ENCODE measurements at regions of chr17 and their contacts with region 1.

Region 1: DNA sequence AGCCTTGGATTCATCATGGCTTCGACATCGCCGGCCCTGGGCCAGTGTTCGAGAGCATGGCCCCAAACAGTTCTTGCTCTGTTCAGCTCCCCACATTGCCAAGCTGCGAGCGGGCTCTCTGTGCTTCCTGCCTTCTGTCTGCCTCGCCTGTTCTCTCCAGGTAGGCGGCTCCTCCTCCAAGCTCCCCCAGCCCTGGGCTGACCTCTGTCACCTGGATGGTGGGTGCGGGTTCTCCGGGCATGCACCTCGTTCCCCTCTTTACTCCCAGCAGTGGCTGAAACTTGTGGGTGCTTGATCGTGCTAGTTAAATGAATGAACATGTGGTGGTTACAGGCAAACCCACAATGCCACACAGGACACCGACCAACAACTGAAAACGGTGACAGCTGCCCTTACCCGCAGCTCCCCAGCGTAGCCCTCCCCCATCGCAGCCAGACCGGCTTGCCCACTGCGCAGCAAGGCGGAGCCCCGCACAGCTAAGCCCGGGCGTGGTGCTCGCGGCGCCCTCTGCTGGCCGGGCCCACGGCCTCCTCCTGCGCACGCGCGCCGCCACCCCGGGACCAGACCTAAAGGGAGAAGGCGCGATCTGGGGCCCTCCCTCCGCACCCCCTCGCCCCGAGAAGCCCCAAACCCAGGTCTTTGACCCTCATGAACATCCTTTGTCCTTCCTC is 23.0 kb upstream of the EIF1 start:
- DNase-seq: peak; percentile 91 to 98 (median 96)
- ATAC-seq: peak; percentile 92
- H3K4me3 ChIP-seq: peak overlapping the region; percentile 39
- H3K27ac ChIP-seq: peak overlapping the region; percentile 81
- H3K4me1 ChIP-seq: peaks cover 40 to 50% of the 10 kb centered on the region in 2 experiments
- H3K27me3 ChIP-seq: no peaks in the 10 kb centered on the region
- CTCF ChIP-seq: peak; percentile 90 to 97 (median 93)
- EP300 ChIP-seq: no peak; the same call in 1 of the 2 replicates
- POLR2A ChIP-seq: peak; percentile 72
- RAD21 ChIP-seq: peak in 1 of 2 experiments; percentile 21; a peak in 2 of 4 replicates

Region 2: GRCh38 chr17:40615295-40615988 is 1050.3 kb before region 1 on chr17:
- CTCF ChIA-PET with region 1: interaction called, 7 read pairs
- POLR2A ChIA-PET with region 1: no interaction called
- in situ Hi-C with region 1: loop called (anchors 25 kb)
- intact Hi-C with region 1: loop called (anchors 5 kb)
- DNase-seq: peak; percentile 52 to 75 (median 64)
- ATAC-seq: peak; percentile 92
- H3K4me3 ChIP-seq: no peak overlapping the region
- H3K27ac ChIP-seq: no peak overlapping the region
- H3K4me1 ChIP-seq: no peaks in the 10 kb centered on the region
- H3K27me3 ChIP-seq: peaks cover 11 to 55% of the 10 kb centered on the region in 2 experiments
- CTCF ChIP-seq: peak; percentile 80 to 83 (median 81)
- EP300 ChIP-seq: no peak
- POLR2A ChIP-seq: no peak
- RAD21 ChIP-seq: peak; percentile 56 to 82

Region 3: DNA sequence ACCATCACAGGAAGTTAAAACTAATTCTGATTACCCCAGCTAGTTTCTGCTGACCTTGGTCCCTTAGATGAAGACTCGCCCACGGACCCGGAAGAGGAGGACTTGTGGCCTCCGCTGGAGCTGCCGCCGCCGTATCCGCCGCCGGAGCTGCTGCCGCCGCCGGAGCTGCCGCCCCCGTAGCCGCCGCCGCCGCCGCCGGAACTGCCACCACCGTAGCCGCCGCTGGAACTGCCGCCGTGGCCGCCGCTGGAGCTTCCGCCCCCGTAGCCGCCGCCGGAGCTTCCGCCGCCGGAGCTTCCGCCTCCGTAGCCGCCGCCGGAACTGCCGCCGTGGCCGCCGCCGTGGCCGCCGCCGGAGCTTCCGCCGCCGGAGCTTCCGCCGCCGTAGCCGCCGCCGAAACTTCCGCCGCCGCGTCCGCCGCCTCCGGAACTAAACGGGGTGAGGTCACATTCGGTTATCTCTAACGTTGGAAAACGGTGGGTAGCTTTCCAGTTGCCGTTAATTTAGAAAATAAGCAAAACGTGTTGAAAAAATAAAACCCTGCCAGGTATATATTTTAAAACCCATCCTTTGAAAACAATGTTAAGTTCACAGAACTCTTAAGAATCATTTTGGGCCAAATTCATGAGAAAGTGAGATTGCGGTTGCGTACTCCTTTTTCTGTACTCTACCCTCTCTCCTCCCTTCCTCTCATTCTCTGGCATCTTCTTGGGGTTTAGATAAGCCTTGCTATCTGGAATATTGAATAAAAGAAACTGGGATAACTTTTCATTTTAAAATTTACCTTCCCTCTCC is 846.8 kb before region 1 on chr17:
- CTCF ChIA-PET with region 1: interaction called, 6 read pairs
- POLR2A ChIA-PET with region 1: interaction called, 3 read pairs
- in situ Hi-C with region 1: no loop called
- intact Hi-C with region 1: loop called (anchors 5 kb)
- DNase-seq: peak; percentile 72 to 89 (median 78)
- ATAC-seq: peak; percentile 75
- H3K4me3 ChIP-seq: peak overlapping the region; percentile 67
- H3K27ac ChIP-seq: peak overlapping the region; percentile 99
- H3K4me1 ChIP-seq: peaks cover 14 to 34% of the 10 kb centered on the region in 2 experiments
- H3K27me3 ChIP-seq: no peaks in the 10 kb centered on the region
- CTCF ChIP-seq: no peak
- EP300 ChIP-seq: peak; percentile 39
- POLR2A ChIP-seq: peak; percentile 85
- RAD21 ChIP-seq: no peak; a peak in 1 of 4 replicates

Region 4: GRCh38 chr17:40909351-40909750 is 756.4 kb before region 1 on chr17:
- CTCF ChIA-PET with region 1: interaction called, 36 read pairs
- POLR2A ChIA-PET with region 1: interaction called, 3 read pairs
- in situ Hi-C with region 1: loop called (anchors 5 kb)
- intact Hi-C with region 1: loop called (anchors 2 kb)
- DNase-seq: peak; percentile 73 to 83 (median 75)
- ATAC-seq: peak; percentile 96
- H3K4me3 ChIP-seq: no peak overlapping the region
- H3K27ac ChIP-seq: no peak overlapping the region
- H3K4me1 ChIP-seq: no peaks in the 10 kb centered on the region
- H3K27me3 ChIP-seq: peaks cover 32 to 37% of the 10 kb centered on the region in 2 experiments
- CTCF ChIP-seq: peak; percentile 83 to 92 (median 87)
- EP300 ChIP-seq: no peak
- POLR2A ChIP-seq: no peak
- RAD21 ChIP-seq: peak; percentile 92 to 93

Region 5: DNA sequence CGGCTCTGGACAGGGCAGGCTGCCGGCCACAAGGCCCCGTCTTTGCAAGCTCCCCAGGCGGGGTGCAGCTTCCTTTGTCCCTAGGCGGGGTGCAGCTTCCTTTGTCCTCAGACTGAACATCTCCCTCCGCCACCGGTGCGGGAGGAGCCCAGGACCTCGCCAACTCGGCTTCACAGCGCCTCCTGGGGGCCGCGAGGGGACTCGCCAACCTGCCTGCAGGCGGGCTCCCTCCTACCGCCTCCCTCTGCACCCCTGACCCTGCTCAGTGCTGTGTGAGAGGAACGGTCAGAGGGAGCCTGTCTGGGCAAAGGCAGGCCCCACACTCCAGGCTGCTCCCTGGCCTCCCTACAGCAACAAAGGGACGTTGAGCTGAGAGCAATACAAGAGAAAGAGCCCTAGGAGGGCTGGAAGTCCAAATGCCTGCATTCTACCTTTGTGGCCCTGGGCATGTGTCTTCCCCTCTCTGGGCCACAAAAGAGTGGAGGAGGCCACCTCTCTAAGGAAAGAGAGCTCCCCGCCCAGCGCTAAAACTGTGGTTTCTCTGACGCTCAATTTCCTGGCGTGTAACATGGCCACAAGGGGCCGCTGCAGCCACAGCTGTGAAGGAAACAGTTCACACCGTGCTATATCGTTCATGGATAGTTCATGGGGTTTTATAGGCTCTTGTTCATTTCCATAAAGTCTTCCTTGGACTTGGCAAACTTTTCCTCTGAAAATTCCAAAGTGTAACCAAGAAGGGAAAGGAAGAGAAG is 116.7 kb before region 1 on chr17:
- CTCF ChIA-PET with region 1: interaction called, 135 read pairs
- POLR2A ChIA-PET with region 1: interaction called, 7 read pairs
- in situ Hi-C with region 1: loop called (anchors 5 kb)
- intact Hi-C with region 1: loop called (anchors 1 kb)
- DNase-seq: peak; percentile 91 to 92 (median 91)
- ATAC-seq: peak; percentile 97
- H3K4me3 ChIP-seq: no peak overlapping the region
- H3K27ac ChIP-seq: peak overlapping the region; percentile 56; the same call in 2 of the 3 replicates
- H3K4me1 ChIP-seq: peaks cover 31 to 34% of the 10 kb centered on the region in 2 experiments
- H3K27me3 ChIP-seq: peaks cover 0 to 4% of the 10 kb centered on the region in 2 experiments; a peak in 1 of 5 replicates
- CTCF ChIP-seq: peak; percentile 93 to 95 (median 95); a peak in 5 of 6 replicates
- EP300 ChIP-seq: no peak
- POLR2A ChIP-seq: no peak
- RAD21 ChIP-seq: peak; percentile 89 to 95

Region 6: GRCh38 chr17:41648411-41649195 is 17.1 kb before region 1 on chr17:
- CTCF ChIA-PET with region 1: interaction called, 87 read pairs
- POLR2A ChIA-PET with region 1: interaction called, 6 read pairs
- in situ Hi-C with region 1: no loop called
- intact Hi-C with region 1: loop called (anchors 1 kb)
- DNase-seq: peak; percentile 86 to 89 (median 86)
- ATAC-seq: peak; percentile 96
- H3K4me3 ChIP-seq: peak overlapping the region; percentile 23
- H3K27ac ChIP-seq: no peak overlapping the region; the same call in 2 of the 3 replicates
- H3K4me1 ChIP-seq: peaks cover 20 to 31% of the 10 kb centered on the region in 2 experiments; a peak in 4 of 5 replicates
- H3K27me3 ChIP-seq: peaks cover 0 to 4% of the 10 kb centered on the region in 2 experiments; a peak in 1 of 5 replicates
- CTCF ChIP-seq: peak; percentile 85 to 95 (median 93)
- EP300 ChIP-seq: no peak
- POLR2A ChIP-seq: no peak
- RAD21 ChIP-seq: peak; percentile 39 to 71

Region 7: DNA sequence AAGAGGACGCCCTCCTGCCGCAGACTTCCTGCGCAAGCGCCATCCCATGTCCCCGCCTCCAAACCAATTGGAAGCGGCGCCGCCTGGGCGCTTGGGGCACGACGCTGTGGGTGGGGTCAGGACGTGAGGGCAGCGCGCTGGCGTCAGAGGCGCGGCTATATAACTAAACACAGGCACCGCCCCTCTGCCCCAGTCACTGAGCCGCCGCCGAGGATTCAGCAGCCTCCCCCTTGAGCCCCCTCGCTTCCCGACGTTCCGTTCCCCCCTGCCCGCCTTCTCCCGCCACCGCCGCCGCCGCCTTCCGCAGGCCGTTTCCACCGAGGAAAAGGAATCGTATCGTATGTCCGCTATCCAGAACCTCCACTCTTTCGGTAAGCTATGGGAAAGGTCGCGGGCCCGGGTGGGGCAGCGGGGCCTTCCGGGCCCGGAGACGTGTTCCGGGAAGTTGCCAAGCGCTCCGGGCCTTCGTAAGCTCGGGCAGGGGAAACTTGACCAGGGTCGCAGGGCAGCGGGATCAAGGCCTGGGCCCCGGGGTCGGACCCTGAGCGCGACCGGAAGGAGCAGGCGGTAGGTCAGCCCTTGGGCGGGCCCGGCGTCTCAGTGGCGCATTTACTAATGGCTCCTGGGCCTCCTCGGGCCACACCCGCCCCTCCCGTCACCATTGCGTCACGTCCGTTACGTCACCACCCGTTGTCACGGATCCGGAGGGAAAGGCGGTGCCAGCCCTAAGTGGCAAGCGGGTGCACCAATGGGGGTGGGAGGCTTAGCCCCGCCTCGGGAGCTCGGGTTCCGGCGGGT is 23.2 kb after region 1 on chr17 and contains the start of gene EIF1:
- CTCF ChIA-PET with region 1: interaction called, 3 read pairs
- POLR2A ChIA-PET with region 1: interaction called, 124 read pairs
- in situ Hi-C with region 1: no loop called
- intact Hi-C with region 1: no loop called
- DNase-seq: peak; percentile 96 to 100 (median 98)
- ATAC-seq: peak; percentile 83
- H3K4me3 ChIP-seq: peak within 1 kb of the TSS; percentile 58
- H3K27ac ChIP-seq: peak within 1 kb of the TSS; percentile 92
- H3K4me1 ChIP-seq: peaks cover 11 to 18% of the 10 kb centered on the region in 2 experiments; a peak in 4 of 5 replicates
- H3K27me3 ChIP-seq: no peaks in the 10 kb centered on the region
- CTCF ChIP-seq: no peak
- EP300 ChIP-seq: peak; percentile 59
- POLR2A ChIP-seq: peak; percentile 100
- RAD21 ChIP-seq: no peak
- polyA plus RNA-seq, gene EIF1: 1,018 to 1,204 TPM

Measured in K562 (cell line).